ENCODE measurements at regions of chr1 and their contacts with region 1.

Region 1: DNA sequence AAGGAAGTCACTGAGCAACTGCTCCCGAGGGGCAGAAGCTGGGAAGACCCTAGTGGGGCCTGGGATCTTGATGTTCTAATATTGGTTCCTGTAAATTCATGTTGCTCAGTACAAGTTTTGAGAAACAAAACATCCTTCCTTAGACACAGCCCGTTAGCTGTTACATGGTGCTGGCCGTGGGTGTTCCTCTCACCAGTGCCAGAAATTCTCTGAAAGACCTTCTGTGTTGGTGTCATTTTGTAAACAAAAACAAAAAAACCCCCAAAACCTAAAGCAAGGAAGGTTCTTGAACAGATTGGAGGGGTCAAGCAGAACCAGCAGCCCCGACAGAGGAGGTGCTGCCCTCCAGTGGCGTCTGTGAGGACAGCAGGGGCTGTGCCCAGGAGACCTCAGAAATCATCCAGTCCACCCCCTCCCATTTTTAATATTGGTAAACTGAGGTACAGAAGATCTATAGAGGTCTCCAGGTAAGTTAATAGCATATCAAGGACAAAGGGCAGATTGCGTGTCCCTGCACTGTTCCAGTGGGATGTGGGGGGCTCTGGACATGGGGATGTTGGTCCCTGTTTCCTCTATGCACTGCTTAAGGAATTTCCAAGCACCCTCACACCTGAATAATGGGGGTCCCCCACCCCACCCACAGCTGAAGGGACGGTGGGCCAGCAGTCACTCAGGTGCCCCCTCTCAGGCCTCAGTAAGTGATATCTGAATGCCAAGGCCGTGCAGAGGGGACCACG is 38.2 kb downstream of the SLC2A7 start:
- DNase-seq: peak; percentile 72
- H3K4me3 ChIP-seq: no peak overlapping the region
- H3K27ac ChIP-seq: peak overlapping the region; percentile 23 to 54
- H3K4me1 ChIP-seq: peaks cover 11% of the 10 kb centered on the region
- H3K27me3 ChIP-seq: no peaks in the 10 kb centered on the region
- CTCF ChIP-seq: peak; percentile 68 to 86 (median 84)
- POLR2A ChIP-seq: no peak

Region 2: GRCh38 chr1:8862528-8862927 is 125.5 kb before region 1 on chr1:
- intact Hi-C with region 1: loop called (anchors 5 kb)
- DNase-seq: no peak
- H3K4me3 ChIP-seq: no peak overlapping the region
- H3K27ac ChIP-seq: no peak overlapping the region
- H3K4me1 ChIP-seq: peaks cover 3% of the 10 kb centered on the region
- H3K27me3 ChIP-seq: no peaks in the 10 kb centered on the region
- CTCF ChIP-seq: peak in 2 of 3 experiments; percentile 28 to 35
- POLR2A ChIP-seq: no peak

Region 3: DNA sequence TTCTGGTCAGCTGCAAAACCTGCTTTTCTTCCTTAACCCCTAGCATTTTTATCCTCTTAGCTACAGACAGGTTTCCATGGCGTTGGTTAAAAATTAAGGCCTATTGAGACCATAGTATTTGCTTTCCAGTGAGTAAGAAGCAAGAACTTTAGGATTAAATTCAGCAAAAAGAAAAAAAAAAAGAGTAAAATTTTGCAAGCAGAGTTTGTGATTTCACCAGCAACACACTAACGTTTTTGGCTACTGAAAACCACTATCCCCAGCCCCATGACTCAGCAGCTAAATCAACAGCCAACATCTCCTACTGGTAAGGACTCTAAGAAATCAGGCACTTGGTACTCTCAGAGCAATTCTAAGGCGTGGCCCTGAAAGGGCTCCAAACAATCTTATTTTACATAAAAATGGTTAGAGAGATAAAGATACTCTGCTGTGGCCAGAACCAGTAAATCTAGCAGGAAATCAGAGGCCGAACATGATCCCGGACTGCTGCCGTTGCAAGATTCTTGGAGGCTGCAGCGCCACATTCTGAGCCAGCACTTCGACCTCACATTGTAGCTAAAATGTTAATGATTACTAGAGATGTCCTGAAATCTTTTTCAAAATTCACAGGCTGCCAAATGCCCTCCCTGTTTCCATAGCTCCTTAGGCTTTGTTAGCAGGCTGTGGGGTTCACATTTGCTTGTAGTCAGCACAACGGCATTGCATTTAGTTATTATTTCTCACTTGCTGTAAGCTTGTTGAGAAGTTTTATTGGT is 108.0 kb before region 1 on chr1:
- intact Hi-C with region 1: no loop called
- DNase-seq: peak; percentile 74
- H3K4me3 ChIP-seq: no peak overlapping the region
- H3K27ac ChIP-seq: peak overlapping the region; percentile 96 to 97
- H3K4me1 ChIP-seq: peaks cover 53% of the 10 kb centered on the region
- H3K27me3 ChIP-seq: no peaks in the 10 kb centered on the region
- CTCF ChIP-seq: no peak
- POLR2A ChIP-seq: no peak

Region 4: GRCh38 chr1:8899076-8899475 is 89.0 kb before region 1 on chr1:
- intact Hi-C with region 1: no loop called
- DNase-seq: no peak
- H3K4me3 ChIP-seq: no peak overlapping the region
- H3K27ac ChIP-seq: no peak overlapping the region
- H3K4me1 ChIP-seq: peaks cover 4% of the 10 kb centered on the region
- H3K27me3 ChIP-seq: no peaks in the 10 kb centered on the region
- CTCF ChIP-seq: no peak
- POLR2A ChIP-seq: no peak

Region 5: GRCh38 chr1:8910914-8911313 is 77.1 kb before region 1 on chr1:
- intact Hi-C with region 1: loop called (anchors 2 kb)
- DNase-seq: no peak
- H3K4me3 ChIP-seq: no peak overlapping the region
- H3K27ac ChIP-seq: no peak overlapping the region
- H3K4me1 ChIP-seq: no peaks in the 10 kb centered on the region
- H3K27me3 ChIP-seq: no peaks in the 10 kb centered on the region
- CTCF ChIP-seq: no peak
- POLR2A ChIP-seq: no peak

Measured in testis (tissue), 5 donors.